Heart right ventricle (tissue), 16 donors: ENCODE measurements at regions of chr13 and their contacts with region 1.

Region 1: GRCh38 chr13:108895220-108895704 is 265.9 kb downstream of the MYO16 start:
- DNase-seq: no peak
- ATAC-seq: no peak
- H3K4me3 ChIP-seq: no peak overlapping the region
- H3K27ac ChIP-seq: no peak overlapping the region
- H3K4me1 ChIP-seq: no peaks in the 10 kb centered on the region
- H3K27me3 ChIP-seq: peaks cover 0 to 9% (median 0%) of the 10 kb centered on the region in 7 donors
- CTCF ChIP-seq: peak; percentile 23 to 75 (median 62)

Region 2: DNA sequence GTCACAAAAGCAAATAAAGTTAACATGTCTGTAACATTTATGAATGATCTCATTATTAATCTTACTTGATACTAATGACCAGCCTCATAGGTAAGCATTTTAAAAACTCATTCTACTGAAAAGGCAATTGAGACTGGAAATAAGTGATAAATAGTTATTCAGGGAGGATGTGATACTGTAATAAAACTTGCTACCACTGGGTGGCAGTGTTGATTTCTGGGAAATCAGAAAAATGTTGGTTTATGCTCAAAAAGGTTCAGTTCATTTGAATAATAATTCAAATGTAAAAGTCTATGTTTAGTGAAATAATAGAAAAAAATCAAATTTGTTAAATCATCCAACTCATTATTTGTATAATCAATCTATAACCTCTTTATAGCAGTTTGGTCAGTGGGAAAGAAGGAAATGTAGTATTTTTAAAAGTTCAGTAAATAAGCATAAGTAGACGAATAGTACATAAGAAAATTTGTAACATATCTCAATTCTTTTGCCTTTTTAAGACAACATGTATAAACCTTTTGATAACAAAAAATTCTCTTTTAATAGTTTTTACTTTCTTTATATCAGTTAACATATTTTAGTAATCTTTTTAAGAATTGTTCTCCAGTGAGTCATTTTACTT is 667.5 kb before region 1 on chr13:
- intact Hi-C with region 1: loop called in 1 of 10 experiments (anchors 5 kb)
- DNase-seq: peak in 1 of 2 donors; percentile 24
- ATAC-seq: no peak
- H3K4me3 ChIP-seq: no peak overlapping the region
- H3K27ac ChIP-seq: no peak overlapping the region
- H3K4me1 ChIP-seq: peaks cover 4 to 54% (median 38%) of the 10 kb centered on the region in 9 donors
- H3K27me3 ChIP-seq: no peaks in the 10 kb centered on the region
- CTCF ChIP-seq: peak; percentile 73 to 87 (median 81)

Region 3: DNA sequence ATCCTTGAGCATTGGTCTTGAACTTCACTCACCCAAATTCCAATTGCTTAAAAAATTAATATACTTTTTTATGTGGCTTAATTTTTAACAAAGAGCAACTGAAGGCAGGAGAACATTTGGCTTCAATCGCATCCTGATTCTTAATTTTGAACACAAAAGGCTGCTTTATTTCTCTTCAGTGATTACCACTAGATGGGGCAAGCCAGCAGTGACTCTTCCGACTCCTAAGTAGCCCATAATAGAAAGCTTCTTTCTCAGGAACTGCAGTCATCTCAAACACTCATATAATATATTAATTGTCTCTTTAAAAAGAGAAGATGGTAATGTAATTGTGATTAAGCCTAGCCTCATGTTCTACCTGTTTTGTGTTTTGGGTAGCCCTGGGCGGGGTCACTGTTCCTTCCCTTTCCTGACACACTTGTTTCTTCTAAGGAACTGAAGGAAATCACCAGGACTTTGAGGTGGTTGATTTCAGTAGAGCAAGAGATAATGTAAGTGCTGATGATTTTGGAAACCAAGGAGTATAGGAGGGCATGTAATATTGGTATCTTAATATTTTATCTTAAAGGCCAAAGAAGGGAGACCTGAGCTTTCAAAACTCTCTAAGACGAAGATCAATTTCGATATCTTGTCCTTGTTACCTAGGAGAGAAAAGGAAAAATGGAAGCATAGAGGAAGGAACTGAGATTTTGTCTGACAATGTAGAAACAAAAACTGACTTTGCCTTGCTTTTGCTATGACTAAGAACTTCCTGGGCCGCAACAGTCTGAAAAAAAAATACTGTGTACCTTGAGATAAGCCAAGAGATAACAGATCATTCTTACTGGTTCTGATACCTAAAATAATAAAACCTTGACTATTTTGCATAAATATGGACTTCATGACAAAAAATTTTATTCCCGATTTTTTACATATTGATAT is 552.6 kb before region 1 on chr13:
- intact Hi-C with region 1: loop called in 8 of 10 experiments (anchors 2 to 10 kb)
- DNase-seq: no peak
- ATAC-seq: no peak
- H3K4me3 ChIP-seq: no peak overlapping the region
- H3K27ac ChIP-seq: no peak overlapping the region
- H3K4me1 ChIP-seq: peaks cover 0 to 15% (median 0%) of the 10 kb centered on the region in 9 donors
- H3K27me3 ChIP-seq: peaks cover 0 to 19% (median 0%) of the 10 kb centered on the region in 7 donors
- CTCF ChIP-seq: peak; percentile 21 to 68 (median 54)

Region 4: DNA sequence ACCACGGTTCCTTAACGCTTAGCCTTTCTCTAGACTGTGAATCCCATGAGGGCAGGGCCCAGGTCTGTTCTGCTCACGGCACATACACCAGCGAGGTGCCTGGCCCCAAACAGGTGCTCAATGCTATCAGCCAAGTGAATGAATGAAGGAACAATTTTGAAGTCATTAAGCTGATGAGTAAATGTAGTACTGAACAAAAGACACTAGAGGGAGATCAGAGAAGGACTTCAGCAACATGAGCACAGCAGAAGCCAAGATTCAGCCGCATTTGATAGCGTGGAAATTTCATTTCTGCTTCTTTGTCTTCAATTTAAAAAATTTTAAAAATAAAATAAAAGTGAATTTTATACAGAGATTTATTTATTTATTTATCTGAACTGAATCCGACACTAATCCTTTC is 285.9 kb before region 1 on chr13:
- intact Hi-C with region 1: loop called in 9 of 10 experiments (anchors 1 to 10 kb)
- DNase-seq: no peak
- ATAC-seq: peak in 2 of 8 donors; percentile 64 to 69
- H3K4me3 ChIP-seq: no peak overlapping the region
- H3K27ac ChIP-seq: no peak overlapping the region
- H3K4me1 ChIP-seq: peaks cover 0 to 7% (median 0%) of the 10 kb centered on the region in 9 donors
- H3K27me3 ChIP-seq: no peaks in the 10 kb centered on the region
- CTCF ChIP-seq: peak; percentile 19 to 63 (median 56)

Region 5: DNA sequence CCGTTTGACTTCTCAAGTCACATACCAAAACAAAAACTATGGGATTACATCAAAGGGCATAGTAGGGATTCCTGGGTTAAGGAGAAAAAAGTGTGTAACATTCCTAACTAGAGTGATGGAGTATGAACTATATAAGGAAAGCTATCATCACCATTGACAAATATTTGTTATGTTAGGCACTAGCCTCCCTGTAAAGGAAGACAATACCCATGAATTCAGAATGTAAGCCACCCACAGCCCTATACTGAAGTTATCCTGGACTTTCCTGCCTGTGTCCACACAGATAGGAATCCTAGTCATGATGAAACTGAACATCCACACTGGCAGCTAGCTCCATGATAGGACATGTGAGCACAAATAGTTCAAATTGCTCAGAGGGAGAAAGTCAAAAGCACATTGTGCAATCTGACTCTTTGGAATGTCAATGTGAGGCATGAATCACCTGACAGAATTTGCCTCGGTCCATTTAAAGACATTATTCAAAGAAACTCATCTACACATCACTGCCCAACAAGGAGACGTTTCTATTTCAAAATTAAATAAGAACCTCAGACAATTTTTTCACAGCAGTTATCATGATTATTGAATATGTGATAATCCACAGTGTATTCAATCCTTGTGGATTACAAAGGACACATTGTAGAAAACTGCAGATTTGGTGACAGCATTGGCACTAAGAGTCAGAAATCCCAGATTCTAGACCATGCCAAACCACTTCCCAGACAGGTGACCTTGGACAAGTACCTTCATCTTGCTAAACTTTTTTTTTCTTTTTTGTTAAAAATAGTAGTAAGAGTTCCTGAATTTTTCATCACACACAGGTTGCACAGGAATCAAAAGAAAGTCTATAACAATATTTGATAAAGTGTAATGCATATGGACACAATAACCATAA is 361.9 kb after region 1 on chr13:
- intact Hi-C with region 1: no loop called
- DNase-seq: peak in 1 of 2 donors; percentile 27
- ATAC-seq: peak; percentile 61 to 98 (median 94)
- H3K4me3 ChIP-seq: no peak overlapping the region
- H3K27ac ChIP-seq: peak overlapping the region in 9 of 10 donors; percentile 3 to 90 (median 73)
- H3K4me1 ChIP-seq: peaks cover 0 to 11% (median 0%) of the 10 kb centered on the region in 9 donors
- H3K27me3 ChIP-seq: no peaks in the 10 kb centered on the region
- CTCF ChIP-seq: no peak